Cardiac septum (tissue), 1 donor: ENCODE measurements at regions of chr19 and their contacts with region 1.

Region 1: DNA sequence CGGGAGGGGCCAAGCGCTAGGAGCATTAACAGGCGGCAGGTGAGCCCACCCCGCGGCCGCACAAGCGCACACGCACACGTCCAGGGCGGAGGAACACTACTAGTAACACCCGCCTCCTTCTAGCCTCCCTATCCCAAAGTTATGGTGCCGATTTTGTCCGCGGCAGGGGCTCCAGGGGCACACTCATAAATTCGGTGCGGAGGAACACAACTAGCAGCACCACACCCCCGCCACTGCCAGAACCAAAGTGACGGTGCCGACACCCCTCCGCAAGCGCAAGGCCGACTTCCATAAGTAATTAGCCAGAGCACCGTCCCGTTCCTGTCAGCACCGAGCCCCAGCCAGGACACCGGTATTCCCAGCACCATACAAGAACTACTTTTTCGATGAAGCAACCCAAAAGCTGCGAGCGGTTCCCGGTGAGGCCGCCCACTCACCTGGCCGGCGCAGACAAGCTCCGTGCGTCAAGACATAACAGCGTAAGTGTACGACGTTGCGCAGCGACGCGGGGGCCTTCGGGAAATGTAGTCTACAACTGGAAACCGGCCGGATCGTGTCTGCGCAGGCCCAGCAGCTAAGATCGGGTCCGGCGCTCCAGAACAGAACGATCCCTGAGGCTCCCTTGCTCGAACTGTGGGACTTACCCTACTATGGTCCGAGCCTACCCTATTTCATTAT is at the starts of genes ZNF540 and ZNF571:
- DNase-seq: peak; percentile 96
- total RNA-seq, gene ZNF540: 4.5 TPM
- total RNA-seq, gene ZNF571: 4.4 TPM

Region 2: GRCh38 chr19:37484406-37485115 is 109.9 kb before region 1 on chr19:
- intact Hi-C with region 1: no loop called
- DNase-seq: no peak

Region 3: DNA sequence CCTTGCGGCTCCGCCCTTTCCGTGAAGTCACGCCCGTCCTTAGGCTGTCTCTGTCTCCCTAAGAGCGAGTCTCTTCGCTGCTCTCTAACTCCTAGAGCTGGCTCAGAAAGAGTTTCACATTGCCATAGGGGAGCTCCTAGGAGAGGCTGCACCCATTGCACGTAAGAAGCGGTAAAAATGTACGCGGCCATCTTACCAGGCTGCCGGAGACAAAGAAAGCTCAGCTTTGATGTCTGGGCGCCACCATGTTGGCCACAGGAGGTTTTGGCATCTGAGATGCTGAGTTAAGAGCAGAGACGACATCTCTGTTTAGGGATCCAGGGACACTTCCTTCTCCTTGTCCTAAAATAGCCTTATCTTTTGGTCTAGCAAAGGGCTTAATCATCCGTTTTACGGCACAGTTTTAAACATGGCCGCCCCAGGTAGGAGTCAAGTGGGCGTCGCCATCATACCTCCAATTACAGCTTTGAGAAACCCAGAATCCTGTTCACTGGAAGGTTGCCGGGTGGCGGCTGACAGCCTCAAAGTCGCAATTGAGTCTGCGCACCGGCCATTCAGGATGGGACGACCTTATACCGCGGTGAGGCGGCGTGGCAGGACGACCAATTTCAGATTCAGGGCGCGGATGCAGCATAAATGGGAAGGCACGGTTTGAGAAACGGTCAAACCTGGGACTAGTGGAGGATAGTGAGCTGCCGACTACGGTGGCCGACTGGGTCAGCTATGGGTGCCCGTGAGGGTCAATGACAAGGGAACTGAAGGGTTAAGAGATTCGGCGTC is 87.9 kb before region 1 on chr19 and contains the start of gene ZNF793:
- intact Hi-C with region 1: no loop called
- DNase-seq: peak; percentile 90
- total RNA-seq, gene ZNF793: 8.3 TPM

Region 4: GRCh38 chr19:37551129-37551993 is 43.1 kb before region 1 on chr19:
- intact Hi-C with region 1: loop called (anchors 5 kb)
- DNase-seq: peak; percentile 86

Region 5: GRCh38 chr19:37686341-37686740 is 91.9 kb after region 1 on chr19:
- intact Hi-C with region 1: no loop called
- DNase-seq: no peak